ENCODE measurements at regions of chr12 and their contacts with region 1.

Region 1: DNA sequence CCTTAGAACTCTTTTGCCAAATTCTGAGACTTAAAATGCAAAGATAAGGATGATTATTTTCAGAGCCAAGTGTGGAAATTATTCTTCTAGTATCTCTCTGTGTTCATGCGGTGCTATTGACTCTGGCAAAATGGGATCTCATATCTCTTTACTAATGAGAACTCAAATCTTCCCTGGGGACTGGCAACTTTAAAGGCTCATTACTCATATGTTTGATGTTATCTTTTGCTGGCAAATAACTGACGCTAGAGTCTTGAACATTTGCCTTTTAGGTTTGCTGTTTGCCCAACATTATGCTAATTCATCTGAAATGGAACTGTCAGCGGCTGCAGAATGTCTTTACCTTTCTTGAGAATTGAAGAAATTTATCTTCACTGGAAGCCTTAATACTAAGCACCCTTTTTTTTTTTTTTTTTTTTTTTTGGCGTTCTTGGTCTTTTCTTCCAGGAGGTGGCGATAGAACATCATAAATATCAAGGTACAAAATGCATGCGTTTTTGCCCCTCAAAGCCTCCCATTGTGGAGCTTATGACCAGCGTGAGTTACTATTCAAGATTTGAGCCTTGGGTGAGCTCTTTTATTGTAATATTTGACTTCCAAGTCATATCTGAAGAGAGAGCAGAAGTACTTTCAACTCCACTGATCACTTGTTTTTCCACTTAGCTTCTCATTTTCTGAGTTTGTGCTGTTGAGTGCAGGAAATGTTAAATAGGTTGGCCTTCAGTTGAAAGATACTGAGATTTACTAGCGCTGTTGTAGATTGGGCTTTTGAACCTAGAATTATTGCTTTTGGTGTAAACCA is 86.6 kb downstream of the CAND1 start:
- DNase-seq: peak; percentile 37 to 55 (median 52)
- H3K4me3 ChIP-seq: no peak overlapping the region
- H3K4me3 Mint-ChIP-seq: peak overlapping the region in 4 of 8 donors; percentile 39 to 63 (median 48)
- H3K27ac ChIP-seq: no peak overlapping the region
- H3K27ac Mint-ChIP-seq: peak overlapping the region in 2 of 7 donors; percentile 3 to 27
- H3K4me1 ChIP-seq: peaks cover 12% of the 10 kb centered on the region
- H3K4me1 Mint-ChIP-seq: peaks cover 7 to 16% (median 10%) of the 10 kb centered on the region in 4 donors
- H3K27me3 ChIP-seq: no peaks in the 10 kb centered on the region
- H3K27me3 Mint-ChIP-seq: no peaks in the 10 kb centered on the region

Region 2: GRCh38 chr12:67436230-67436629 is 80.5 kb after region 1 on chr12:
- CTCF ChIA-PET with region 1: interaction called, 13 read pairs
- POLR2A ChIA-PET with region 1: interaction called, 3 read pairs
- intact Hi-C with region 1: loop called (anchors 2 kb)
- DNase-seq: no peak
- H3K4me3 ChIP-seq: no peak overlapping the region
- H3K4me3 Mint-ChIP-seq: no peak overlapping the region
- H3K27ac ChIP-seq: no peak overlapping the region
- H3K27ac Mint-ChIP-seq: no peak overlapping the region
- H3K4me1 ChIP-seq: no peaks in the 10 kb centered on the region
- H3K4me1 Mint-ChIP-seq: peaks cover 10 to 12% (median 11%) of the 10 kb centered on the region in 4 donors
- H3K27me3 ChIP-seq: no peaks in the 10 kb centered on the region
- H3K27me3 Mint-ChIP-seq: no peaks in the 10 kb centered on the region

Region 3: DNA sequence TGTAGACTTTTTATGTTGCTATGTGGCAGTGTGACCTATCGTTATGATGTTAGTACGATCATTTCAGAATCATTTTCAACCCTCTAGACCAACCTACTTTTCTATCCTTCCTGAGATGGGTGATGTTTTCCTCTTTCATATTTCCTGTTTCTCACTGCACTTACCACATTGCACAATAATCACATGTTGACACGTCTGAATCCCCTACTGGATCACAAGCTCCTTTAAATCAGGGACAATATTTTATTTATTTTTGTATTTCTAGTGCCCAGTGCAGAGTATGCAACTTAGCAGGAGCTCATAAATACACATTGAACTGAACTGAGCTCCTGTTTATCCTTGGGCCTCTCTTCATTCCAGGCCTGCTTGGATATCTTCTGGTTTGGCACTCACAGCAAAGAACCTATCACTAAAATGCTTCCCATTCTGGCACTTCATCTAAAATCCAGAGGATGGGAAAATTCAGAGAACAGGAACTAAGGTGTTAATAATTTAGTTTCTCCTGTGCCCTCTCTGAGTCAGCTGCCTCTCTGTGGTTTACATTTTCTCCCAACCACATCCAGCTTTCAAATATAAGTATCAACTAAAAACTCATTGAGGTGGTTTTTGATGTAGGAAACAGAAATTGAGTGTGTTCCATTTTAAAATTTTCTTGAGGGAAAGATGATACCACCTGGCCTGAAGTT is 223.3 kb after region 1 on chr12:
- CTCF ChIA-PET with region 1: interaction called, 12 read pairs
- POLR2A ChIA-PET with region 1: interaction called, 8 read pairs
- intact Hi-C with region 1: no loop called
- DNase-seq: peak; percentile 57 to 75 (median 66)
- H3K4me3 ChIP-seq: peak overlapping the region; percentile 2 to 8
- H3K4me3 Mint-ChIP-seq: peak overlapping the region in 7 of 8 donors; percentile 75 to 89 (median 79)
- H3K27ac ChIP-seq: no peak overlapping the region
- H3K27ac Mint-ChIP-seq: peak overlapping the region; percentile 55 to 89 (median 82)
- H3K4me1 ChIP-seq: peaks cover 49% of the 10 kb centered on the region
- H3K4me1 Mint-ChIP-seq: peaks cover 41 to 65% (median 50%) of the 10 kb centered on the region in 4 donors
- H3K27me3 ChIP-seq: no peaks in the 10 kb centered on the region
- H3K27me3 Mint-ChIP-seq: no peaks in the 10 kb centered on the region

Region 4: DNA sequence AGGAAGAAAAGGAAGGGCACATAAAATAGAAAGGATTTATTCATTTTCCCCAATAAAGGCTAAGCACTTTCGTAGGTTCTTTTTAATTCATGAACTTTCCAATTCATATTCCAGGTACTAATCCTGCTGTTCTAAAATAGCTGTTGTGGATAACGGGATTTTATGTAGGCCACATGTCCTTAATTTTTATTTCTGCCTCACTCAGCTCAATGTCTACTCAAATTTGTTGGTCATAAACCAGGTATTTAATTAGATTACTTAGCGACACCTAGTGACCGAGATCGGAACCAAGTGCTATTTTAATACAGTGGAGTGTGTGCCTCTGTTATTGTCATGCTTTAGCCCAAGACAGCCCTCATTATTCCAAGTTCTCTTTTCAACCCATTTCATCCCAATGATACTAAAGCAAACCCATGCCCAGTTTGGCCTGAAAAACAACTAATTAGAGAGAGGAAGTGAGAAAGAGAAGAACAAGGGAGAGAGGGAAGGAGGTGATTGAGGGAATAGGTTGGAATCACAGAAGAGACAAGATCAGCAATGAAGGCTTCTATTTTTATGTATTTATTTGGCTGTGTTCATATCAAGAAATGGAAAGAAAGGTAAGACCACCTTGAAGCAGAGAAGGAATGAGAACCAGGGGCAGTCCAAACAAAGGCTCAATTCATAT is 587.6 kb after region 1 on chr12:
- CTCF ChIA-PET with region 1: interaction called, 301 read pairs
- POLR2A ChIA-PET with region 1: interaction called, 26 read pairs
- intact Hi-C with region 1: loop called (anchors 1 kb)
- DNase-seq: peak; percentile 62 to 71 (median 65)
- H3K4me3 ChIP-seq: no peak overlapping the region
- H3K4me3 Mint-ChIP-seq: no peak overlapping the region
- H3K27ac ChIP-seq: no peak overlapping the region
- H3K27ac Mint-ChIP-seq: peak overlapping the region in 1 of 7 donors; percentile 37
- H3K4me1 ChIP-seq: no peaks in the 10 kb centered on the region
- H3K4me1 Mint-ChIP-seq: peaks cover 3 to 5% (median 4%) of the 10 kb centered on the region in 4 donors
- H3K27me3 ChIP-seq: no peaks in the 10 kb centered on the region
- H3K27me3 Mint-ChIP-seq: peaks cover 1 to 2% of the 10 kb centered on the region in 2 donors

Region 5: DNA sequence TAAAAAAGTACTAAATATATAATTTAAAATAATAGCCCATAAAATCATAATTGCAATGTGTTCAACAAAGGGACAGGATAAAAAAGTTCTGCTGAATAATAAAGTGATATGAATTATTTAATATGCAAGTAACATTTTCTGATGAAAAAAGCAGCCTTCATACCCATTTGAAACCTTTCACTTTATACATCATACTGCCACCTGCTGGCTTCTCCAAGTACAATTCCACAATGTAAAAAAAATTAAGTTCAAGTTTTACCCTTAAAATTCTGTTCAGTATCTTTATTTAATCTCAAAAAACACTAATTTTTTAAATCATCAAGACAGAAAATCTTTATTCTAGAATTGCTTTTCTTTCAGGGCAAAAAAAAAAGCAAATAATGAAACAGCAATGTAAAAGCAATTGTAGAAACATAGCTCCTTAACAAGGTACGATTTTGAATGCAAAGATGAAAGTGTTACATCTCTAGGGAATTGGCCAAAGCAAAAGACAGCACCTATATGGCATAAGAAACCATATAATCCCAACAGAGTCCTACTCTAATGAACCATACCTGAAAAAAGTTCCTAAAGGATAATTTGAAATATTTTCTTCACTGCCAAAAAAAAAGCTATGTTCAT is 961.4 kb after region 1 on chr12:
- CTCF ChIA-PET with region 1: interaction called, 7 read pairs
- POLR2A ChIA-PET with region 1: no interaction called
- intact Hi-C with region 1: loop called (anchors 2 kb)
- DNase-seq: peak in 4 of 5 donors; percentile 48 to 58 (median 54)
- H3K4me3 ChIP-seq: no peak overlapping the region
- H3K4me3 Mint-ChIP-seq: no peak overlapping the region
- H3K27ac ChIP-seq: no peak overlapping the region
- H3K27ac Mint-ChIP-seq: no peak overlapping the region
- H3K4me1 ChIP-seq: no peaks in the 10 kb centered on the region
- H3K4me1 Mint-ChIP-seq: peaks cover 0 to 2% (median 0%) of the 10 kb centered on the region in 4 donors
- H3K27me3 ChIP-seq: no peaks in the 10 kb centered on the region
- H3K27me3 Mint-ChIP-seq: no peaks in the 10 kb centered on the region